Cardiac septum (tissue), 1 donor: ENCODE measurements at regions of chr10 and their contacts with region 1.

Region 1: DNA sequence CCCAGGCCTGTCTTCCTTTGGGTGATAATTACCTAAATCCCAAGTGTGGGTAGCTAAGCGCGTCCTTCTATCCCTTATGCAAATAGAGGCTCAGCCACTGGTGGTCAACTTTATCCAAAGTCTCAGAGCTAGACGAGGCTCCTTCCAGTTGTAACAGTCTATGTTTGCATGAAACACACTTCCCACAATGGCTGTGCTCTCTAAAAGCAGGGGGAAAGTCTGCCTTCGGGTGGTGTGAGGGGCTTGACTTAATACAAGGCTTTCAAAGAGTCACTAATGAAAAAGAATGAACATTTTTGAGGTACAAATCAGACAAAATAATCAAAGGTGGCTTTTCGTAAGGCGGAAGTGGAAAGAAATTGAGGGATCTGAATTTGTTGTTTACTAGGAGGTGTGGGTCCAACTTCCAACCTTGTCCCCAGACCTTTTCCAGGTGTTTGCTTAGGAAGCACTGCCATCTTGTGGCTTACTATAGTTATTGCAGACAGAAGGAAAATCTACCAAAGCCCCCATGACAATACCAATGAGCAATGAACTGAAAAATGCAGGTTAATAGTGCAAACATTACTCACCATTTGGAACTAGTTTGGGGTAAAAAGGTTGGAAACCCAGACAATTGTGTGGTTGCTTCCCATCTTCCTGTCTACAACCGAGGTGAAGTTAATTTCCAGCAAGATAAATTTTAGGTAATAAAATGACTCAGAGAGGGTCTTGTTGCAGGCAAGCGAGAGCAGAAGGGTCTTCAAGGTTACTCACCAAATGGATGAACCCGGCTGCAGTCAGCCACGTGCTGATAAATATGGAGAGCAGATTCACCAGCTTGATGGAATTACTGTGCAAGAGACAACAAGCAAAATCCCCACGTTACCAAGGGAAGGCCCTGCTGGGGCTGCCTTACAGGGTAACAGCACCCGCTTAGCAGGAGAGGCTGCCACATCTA is 525.7 kb downstream of the KCNMA1 start:
- DNase-seq: no peak

Region 2: DNA sequence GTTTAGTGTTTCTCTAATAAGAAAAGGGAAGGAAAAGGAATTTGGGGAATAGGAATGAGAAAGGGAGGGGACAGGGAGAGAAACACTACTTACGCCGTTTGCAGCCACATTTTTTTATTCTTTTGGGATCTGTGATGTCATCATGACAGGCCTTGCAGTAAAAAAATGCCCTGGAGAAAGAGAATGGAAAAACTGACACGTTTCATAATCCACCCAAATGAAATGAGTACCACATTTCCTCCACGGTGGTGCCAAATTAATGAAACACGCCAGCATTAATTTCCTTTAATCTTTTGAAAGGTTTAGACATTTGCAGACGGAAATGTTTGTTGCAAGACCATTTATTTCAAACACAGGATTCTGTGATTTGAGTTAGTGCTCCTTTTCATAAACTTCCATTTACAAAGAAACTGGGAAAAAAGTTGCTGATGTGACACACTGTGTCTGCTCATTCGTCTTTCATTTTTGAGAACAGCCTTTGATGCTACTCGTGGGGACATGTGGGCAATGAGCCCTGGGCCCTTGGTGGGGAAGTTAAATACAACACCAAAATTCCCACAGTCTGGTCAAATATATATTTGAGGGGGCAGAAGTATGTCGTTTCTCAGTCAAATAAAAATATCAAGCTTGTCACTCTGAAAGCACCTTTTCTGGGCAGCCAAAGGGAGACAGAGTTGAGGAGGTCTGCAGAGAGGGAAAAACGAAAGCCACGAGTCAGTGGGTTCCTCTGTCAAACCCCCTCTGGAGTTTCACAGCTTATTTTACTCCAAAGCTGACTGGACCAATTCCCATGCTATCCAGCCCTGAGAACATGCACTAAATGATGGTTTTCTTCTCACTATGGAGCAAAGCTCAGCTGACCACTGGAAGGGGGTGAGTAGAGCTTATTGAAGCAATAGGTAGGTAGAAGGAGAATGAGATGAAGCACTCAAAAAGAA is 99.7 kb before region 1 on chr10:
- intact Hi-C with region 1: loop called (anchors 5 kb)
- DNase-seq: no peak

Region 3: GRCh38 chr10:77179015-77179695 is 67.3 kb after region 1 on chr10:
- intact Hi-C with region 1: no loop called
- DNase-seq: no peak